ENCODE measurements at regions of chr10 and their contacts with region 1.

Region 1: DNA sequence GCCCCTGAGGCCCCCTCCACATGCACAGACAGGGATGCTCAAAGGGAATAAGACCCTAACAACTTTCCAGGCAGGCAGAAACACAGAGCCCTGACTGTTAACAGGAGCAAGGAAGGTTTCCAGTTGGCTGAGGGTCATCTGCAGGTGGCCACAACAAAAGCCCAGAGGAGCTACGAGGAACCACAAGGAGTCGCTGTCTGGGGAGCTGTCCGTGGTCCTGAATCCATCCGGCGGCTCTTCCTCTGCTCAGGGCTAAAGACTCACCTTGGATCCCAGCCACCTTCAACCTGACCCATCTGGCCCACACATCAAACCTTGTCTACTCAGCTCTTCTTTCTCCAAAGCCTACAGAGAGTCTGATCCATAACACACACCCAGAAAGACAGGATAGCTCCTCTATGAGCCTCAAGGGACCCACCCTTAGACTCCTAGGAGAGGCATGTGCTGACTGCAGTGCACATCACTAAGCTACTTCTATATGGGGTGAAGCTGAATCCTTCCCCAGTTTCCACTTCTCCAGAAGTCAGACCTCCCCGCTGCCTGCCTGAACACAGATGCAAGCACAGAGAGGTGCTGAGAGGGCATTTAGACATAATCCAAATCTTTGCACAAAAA is 104.0 kb downstream of the SLIT1 start:
- DNase-seq: peak; percentile 51
- H3K4me3 ChIP-seq: no peak overlapping the region
- H3K27ac ChIP-seq: no peak overlapping the region
- H3K4me1 ChIP-seq: no peaks in the 10 kb centered on the region
- H3K27me3 ChIP-seq: peaks cover 4% of the 10 kb centered on the region
- CTCF ChIP-seq: peak; percentile 35 to 59 (median 50)
- EP300 ChIP-seq: no peak
- POLR2A ChIP-seq: no peak

Region 2: DNA sequence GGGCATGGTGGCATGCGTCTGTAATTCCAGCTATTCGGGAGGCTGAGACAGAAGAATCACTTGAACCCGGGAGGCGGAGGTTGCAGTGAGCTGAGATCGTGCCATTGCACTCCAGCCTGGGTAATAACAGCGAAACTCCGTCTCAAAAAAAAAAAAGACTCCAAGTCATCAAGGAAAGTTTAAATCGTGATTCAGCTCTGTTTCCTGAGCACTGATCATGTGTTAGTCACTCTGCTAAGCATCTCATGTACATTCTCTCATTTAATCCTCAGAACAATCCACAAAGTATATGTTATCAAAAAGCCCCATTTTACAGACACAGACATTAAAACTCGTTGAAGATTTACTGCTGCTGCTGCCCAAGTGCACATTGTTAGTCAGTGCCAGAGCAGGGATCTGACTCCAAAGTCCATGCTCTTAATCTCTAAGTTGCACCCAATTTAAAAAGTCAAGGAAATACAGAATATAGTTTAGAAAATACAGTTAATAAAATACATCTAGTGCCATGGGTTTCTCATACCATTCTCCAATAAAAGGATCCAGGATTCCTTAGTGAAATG is 367.6 kb before region 1 on chr10:
- in situ Hi-C with region 1: no loop called
- intact Hi-C with region 1: no loop called
- DNase-seq: no peak
- H3K4me3 ChIP-seq: no peak overlapping the region
- H3K27ac ChIP-seq: no peak overlapping the region
- H3K4me1 ChIP-seq: peaks cover 0 to 11% (median 0%) of the 10 kb centered on the region in 4 donors
- H3K27me3 ChIP-seq: no peaks in the 10 kb centered on the region
- CTCF ChIP-seq: no peak
- EP300 ChIP-seq: no peak
- POLR2A ChIP-seq: no peak

Region 3: GRCh38 chr10:96949039-96949683 is 132.6 kb before region 1 on chr10:
- in situ Hi-C with region 1: no loop called
- intact Hi-C with region 1: no loop called
- DNase-seq: no peak
- H3K4me3 ChIP-seq: no peak overlapping the region
- H3K27ac ChIP-seq: no peak overlapping the region
- H3K4me1 ChIP-seq: no peaks in the 10 kb centered on the region
- H3K27me3 ChIP-seq: no peaks in the 10 kb centered on the region
- CTCF ChIP-seq: no peak
- EP300 ChIP-seq: no peak
- POLR2A ChIP-seq: no peak

Region 4: DNA sequence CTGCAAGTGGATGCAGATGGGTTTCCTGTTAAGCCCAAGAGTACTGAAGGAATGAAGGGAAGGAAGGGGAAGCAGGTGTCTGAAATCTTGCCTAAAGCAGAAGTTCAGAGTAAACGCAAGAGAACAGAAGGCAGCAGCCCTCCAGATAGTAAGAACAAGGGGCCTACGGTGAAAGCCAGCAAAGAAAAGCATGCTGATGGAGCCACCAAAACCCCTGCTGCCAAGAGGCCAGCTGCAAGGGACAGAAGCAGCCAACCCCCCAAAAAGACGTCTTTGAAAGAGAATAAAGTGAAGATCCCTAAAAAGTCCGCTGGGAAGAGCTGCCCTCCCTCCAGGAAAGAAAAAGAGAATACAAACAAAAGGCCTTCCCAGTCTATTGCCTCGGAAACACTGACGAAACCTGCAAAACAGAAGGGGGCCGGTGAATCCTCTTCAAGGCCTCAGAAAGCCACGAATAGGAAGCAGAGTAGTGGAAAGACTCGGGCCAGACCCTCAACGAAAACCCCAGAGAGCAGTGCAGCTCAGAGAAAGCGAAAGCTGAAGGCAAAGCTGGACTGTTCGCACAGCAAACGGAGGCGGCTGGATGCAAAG is 97.1 kb before region 1 on chr10:
- in situ Hi-C with region 1: no loop called
- intact Hi-C with region 1: no loop called
- DNase-seq: no peak
- H3K4me3 ChIP-seq: no peak overlapping the region
- H3K27ac ChIP-seq: no peak overlapping the region
- H3K4me1 ChIP-seq: peaks cover 0 to 4% (median 2%) of the 10 kb centered on the region in 4 donors
- H3K27me3 ChIP-seq: no peaks in the 10 kb centered on the region
- CTCF ChIP-seq: no peak
- EP300 ChIP-seq: no peak
- POLR2A ChIP-seq: no peak

Region 5: DNA sequence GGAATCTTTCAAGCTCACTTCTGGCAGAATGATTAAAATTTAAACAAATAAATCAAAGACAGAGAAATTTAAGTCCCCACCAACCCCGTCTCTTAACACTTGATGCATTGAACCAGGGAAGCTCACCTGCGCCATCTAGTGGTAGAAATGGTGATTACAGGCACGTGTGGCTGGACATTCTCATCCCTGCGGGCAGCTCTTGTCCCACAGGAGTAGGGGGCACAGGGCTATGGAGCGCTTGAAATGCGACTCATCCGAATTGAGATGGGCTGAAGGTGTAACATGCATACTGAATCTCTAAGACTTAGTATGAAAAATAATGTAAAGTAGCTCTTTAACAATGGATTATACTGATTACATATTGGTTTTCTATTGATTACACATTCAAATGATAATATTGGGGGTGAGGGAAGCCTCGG is 128.8 kb after region 1 on chr10:
- in situ Hi-C with region 1: loop called in 3 of 4 experiments (anchors 5 to 25 kb)
- intact Hi-C with region 1: no loop called
- DNase-seq: peak; percentile 66
- H3K4me3 ChIP-seq: no peak overlapping the region
- H3K27ac ChIP-seq: no peak overlapping the region
- H3K4me1 ChIP-seq: no peaks in the 10 kb centered on the region
- H3K27me3 ChIP-seq: no peaks in the 10 kb centered on the region
- CTCF ChIP-seq: peak; percentile 88 to 100 (median 97)
- EP300 ChIP-seq: no peak
- POLR2A ChIP-seq: no peak